Head of caudate nucleus (tissue), 42 donors: ENCODE measurements at regions of chr3 and their contacts with region 1.

Region 1: DNA sequence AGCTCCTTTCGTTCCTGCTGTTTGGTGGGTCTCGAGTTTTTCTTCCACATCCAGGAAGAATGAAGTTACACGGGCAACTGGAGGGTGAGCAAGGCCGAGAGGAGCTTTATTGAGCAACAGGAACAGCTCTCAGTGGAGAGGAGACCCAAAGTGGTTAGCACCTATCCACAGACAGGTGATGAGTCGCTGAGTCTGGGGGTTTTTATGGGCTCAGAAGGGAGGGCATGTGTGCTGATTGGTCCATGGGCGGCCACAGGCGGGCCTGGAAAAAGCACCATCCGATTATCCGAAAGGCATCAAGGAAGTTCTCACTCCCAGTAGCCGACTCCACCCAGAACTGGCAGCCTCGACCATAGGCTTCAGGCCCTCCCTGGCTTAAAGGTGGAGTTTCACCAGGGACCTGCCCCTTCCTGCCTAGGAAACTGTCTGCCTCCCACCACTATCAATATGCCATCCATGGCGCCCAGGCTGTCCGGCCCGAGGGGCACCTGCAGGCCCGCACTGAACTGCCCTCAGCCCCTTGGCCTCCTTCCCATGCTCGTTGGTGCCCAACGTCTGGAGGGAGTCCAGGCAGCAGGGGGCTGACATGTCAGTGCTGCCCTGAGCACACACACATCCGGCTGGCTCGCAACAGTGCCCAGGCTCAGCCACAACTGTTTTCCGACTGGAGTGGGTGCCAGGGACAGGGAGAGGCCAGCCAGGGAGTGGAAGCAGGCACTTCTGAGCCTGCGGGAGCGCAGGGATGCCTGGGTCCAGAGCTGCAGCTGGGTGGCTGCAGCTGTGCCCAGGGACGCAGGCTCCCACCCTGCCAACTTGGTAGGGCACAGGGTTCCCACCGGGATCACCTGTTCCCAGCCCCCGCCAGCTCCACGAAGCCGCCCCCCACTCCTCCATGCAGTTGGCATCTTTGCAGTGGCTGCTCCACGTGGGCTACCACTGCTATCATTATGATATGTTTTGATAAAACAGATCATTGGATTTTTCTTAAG is 170.2 kb downstream of the FNDC3B start:
- DNase-seq: peak in 18 of 42 donors; percentile 4 to 50 (median 30)

Region 2: GRCh38 chr3:172039436-172040077 is 170.1 kb before region 1 on chr3 and contains the start of gene FNDC3B:
- intact Hi-C with region 1: loop called (anchors 10 kb)
- DNase-seq: peak; percentile 92 to 99 (median 96)

Region 3: DNA sequence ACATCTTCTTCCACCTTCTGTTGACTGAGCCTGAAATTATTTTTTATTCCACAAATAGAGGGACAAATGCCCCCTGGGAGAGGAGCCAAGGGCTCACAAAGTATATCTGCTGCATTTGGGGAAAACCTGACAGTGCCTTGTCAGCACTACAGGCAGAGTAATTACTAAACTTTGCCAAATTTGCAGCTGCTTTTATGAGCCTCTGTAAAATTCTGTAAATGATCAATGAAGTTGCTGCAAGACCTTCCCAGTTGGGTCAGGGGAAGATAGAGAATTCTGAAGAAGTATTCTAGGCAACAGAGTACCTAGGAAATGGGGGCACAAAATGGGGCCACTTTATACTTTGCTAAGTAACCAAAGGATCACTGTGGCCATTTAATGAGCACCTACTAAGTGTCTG is 228.1 kb after region 1 on chr3:
- intact Hi-C with region 1: no loop called
- DNase-seq: no peak